Naive thymus-derived CD8-positive, alpha-beta T cell (primary cell): ENCODE measurements at regions of chr17 and their contacts with region 1.

Region 1: DNA sequence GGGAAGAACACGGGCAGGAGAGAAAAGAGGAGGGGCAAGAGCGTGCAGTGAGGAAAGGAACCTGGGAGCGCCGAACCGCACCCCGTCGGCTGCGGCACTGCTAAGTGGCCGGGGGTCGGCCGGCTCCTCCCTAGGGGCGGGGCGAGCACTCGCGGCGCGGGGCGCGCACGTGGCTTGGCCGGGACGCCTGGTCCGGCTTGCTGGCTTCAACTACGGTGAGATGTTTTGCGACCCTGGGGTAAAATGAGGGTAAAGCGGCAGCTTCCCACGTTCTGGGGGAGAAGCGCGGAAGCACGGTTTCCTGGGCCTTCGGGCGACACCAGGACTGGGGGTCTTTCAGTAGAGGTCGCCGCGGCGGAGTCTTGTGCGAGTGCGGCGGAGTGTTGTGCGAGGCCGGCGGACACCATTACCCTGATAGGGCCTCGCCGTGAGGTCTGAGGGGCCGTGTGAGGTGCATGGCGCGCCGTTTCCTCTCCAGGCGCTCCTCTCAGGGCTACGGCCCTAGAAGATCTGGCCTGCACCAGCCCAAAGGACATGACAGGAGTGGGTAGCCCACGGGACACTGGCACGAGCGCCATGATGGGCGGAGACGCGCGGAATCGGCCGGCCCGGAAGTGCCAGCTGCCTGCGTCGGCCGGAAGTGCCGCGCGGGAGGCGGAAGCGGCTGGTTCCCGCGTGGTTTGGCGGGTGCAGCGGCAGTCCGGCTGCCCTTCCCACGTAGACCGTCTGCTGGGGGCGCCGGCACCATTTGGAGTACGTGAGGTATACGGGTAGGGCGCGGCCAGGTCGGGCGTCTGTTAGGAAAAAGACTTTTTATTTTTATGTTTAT is at the starts of genes MYO19 and PIGW:
- DNase-seq: peak; percentile 77 to 91 (median 83)
- ATAC-seq: peak; percentile 79 to 80
- H3K4me3 Mint-ChIP-seq: peak within 1 kb of the TSS; percentile 92 to 98 (median 97)
- H3K27ac Mint-ChIP-seq: peak within 1 kb of the TSS; percentile 95 to 99 (median 98)
- H3K4me1 Mint-ChIP-seq: peaks cover 9 to 21% (median 16%) of the 10 kb centered on the region in 4 donors
- H3K27me3 Mint-ChIP-seq: no peaks in the 10 kb centered on the region
- polyA plus RNA-seq, gene MYO19: 2.3 to 4.6 (median 4.6) TPM
- polyA plus RNA-seq, gene PIGW: 10.2 to 14.9 (median 11.2) TPM

Region 2: GRCh38 chr17:36486204-36487194 is 48.6 kb before region 1 on chr17 and contains the start of gene ZNHIT3:
- POLR2A ChIA-PET with region 1: interaction called, 18 read pairs
- DNase-seq: peak; percentile 80 to 94 (median 88)
- ATAC-seq: peak; percentile 90 to 97
- H3K4me3 Mint-ChIP-seq: peak within 1 kb of the TSS; percentile 94 to 100 (median 99)
- H3K27ac Mint-ChIP-seq: peak within 1 kb of the TSS; percentile 96 to 100 (median 99)
- H3K4me1 Mint-ChIP-seq: peaks cover 31 to 68% (median 61%) of the 10 kb centered on the region in 4 donors
- H3K27me3 Mint-ChIP-seq: peaks cover 2 to 12% (median 10%) of the 10 kb centered on the region in 5 donors
- polyA plus RNA-seq, gene ZNHIT3: 89.1 to 98.8 (median 91.2) TPM

Region 3: GRCh38 chr17:36524428-36524876 is 10.6 kb before region 1 on chr17:
- POLR2A ChIA-PET with region 1: interaction called, 12 read pairs
- DNase-seq: no peak
- ATAC-seq: no peak
- H3K4me3 Mint-ChIP-seq: no peak overlapping the region
- H3K27ac Mint-ChIP-seq: peak overlapping the region in 3 of 10 donors; percentile 1 to 68 (median 39)
- H3K4me1 Mint-ChIP-seq: peaks cover 0 to 15% (median 7%) of the 10 kb centered on the region in 4 donors
- H3K27me3 Mint-ChIP-seq: no peaks in the 10 kb centered on the region

Region 4: GRCh38 chr17:36545465-36546417 is 10.7 kb after region 1 on chr17:
- POLR2A ChIA-PET with region 1: interaction called, 181 read pairs
- DNase-seq: peak; percentile 94 to 99 (median 98)
- ATAC-seq: peak; percentile 77 to 78
- H3K4me3 Mint-ChIP-seq: peak overlapping the region; percentile 88 to 97 (median 91)
- H3K27ac Mint-ChIP-seq: peak overlapping the region; percentile 94 to 99 (median 96)
- H3K4me1 Mint-ChIP-seq: peaks cover 19 to 55% (median 43%) of the 10 kb centered on the region in 4 donors
- H3K27me3 Mint-ChIP-seq: no peaks in the 10 kb centered on the region

Region 5: DNA sequence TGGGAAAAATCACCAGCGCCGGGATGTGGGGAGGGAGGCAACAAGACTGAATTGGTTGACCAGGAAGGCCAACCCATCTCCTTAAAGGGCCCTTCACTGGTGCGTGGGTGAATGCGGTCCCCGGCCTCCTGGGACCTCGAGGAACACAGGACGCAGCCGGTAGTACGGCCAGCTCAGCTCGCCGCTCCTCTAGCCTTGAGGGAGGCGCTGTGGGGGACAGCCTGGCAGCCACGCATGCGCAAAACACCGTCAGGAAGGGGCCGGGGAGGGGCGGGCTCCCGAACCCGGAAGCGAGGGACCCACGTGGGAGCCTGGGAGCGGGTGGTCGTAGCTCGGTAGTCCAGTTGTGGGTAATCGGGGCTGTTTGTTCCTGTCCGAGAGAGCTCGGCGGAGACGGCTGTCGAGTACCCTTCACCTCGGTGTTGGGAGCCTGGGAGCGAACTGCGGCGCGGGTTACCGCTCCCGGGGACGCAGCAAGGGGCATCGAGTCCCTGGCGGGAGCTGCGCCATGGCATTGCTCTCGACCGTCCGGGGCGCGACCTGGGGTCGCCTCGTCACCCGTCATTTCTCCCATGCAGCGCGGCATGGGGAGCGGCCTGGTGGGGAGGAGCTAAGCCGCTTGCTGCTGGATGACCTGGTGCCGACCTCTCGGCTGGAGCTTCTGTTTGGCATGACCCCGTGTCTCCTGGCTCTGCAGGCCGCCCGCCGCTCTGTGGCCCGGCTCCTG is 66.4 kb after region 1 on chr17 and contains the start of gene MRM1:
- POLR2A ChIA-PET with region 1: interaction called, 34 read pairs
- DNase-seq: peak; percentile 77 to 95 (median 86)
- ATAC-seq: peak; percentile 81 to 87
- H3K4me3 Mint-ChIP-seq: peak within 1 kb of the TSS; percentile 90 to 97 (median 93)
- H3K27ac Mint-ChIP-seq: peak within 1 kb of the TSS; percentile 93 to 99 (median 96)
- H3K4me1 Mint-ChIP-seq: peaks cover 31 to 45% (median 43%) of the 10 kb centered on the region in 4 donors
- H3K27me3 Mint-ChIP-seq: no peaks in the 10 kb centered on the region
- polyA plus RNA-seq, gene MRM1: 3.2 to 11.1 (median 6.8) TPM